ENCODE measurements at regions of chr4 and their contacts with region 1.

Region 1: GRCh38 chr4:10013722-10014121 is 7.6 kb downstream of the SLC2A9 start:
- DNase-seq: no peak
- ATAC-seq: peak; percentile 86
- H3K4me3 ChIP-seq: no peak overlapping the region
- H3K27ac ChIP-seq: no peak overlapping the region
- H3K4me1 ChIP-seq: peaks cover 8% of the 10 kb centered on the region; the same call in 1 of the 2 replicates
- H3K27me3 ChIP-seq: no peaks in the 10 kb centered on the region
- CTCF ChIP-seq: peak; percentile 72 to 78 (median 76)
- EP300 ChIP-seq: no peak
- POLR2A ChIP-seq: no peak
- RAD21 ChIP-seq: peak; percentile 80

Region 2: GRCh38 chr4:9781343-9782135 is 232.2 kb before region 1 on chr4 and contains the start of gene DRD5:
- CTCF ChIA-PET with region 1: interaction called, 15 read pairs
- POLR2A ChIA-PET with region 1: no interaction called
- RAD21 ChIA-PET with region 1: interaction called, 3 read pairs
- SMC1A ChIA-PET with region 1: no interaction called
- in situ Hi-C with region 1: no loop called
- intact Hi-C with region 1: no loop called
- DNase-seq: no peak
- ATAC-seq: no peak
- H3K4me3 ChIP-seq: no peak within 1 kb of the TSS
- H3K27ac ChIP-seq: no peak within 1 kb of the TSS
- H3K4me1 ChIP-seq: no peaks in the 10 kb centered on the region
- H3K27me3 ChIP-seq: no peaks in the 10 kb centered on the region; a peak in 1 of 4 replicates
- CTCF ChIP-seq: no peak
- EP300 ChIP-seq: no peak
- POLR2A ChIP-seq: no peak
- RAD21 ChIP-seq: no peak
- polyA plus RNA-seq, gene DRD5: not detected

Region 3: DNA sequence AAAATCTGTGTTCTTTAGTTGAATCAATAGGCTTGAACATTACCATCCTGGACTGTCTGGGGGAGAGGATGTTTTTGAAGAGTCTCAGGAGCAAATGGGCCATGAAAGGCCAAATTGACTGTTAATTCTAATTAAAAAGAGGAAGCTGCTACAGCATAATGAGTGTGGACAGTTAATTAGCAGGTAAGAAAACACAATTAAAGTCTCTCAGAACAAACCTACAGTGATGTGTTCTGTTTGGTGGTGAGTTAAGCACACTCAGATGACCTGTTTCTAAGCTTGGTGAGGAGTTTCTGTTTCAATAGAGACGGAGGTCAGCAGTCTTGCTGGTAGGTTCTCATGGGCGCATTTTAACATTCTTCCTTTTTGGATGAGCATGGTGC is 164.2 kb before region 1 on chr4:
- CTCF ChIA-PET with region 1: interaction called, 11 read pairs
- POLR2A ChIA-PET with region 1: no interaction called
- RAD21 ChIA-PET with region 1: interaction called, 3 read pairs
- SMC1A ChIA-PET with region 1: interaction called, 5 read pairs
- in situ Hi-C with region 1: no loop called
- intact Hi-C with region 1: no loop called
- DNase-seq: peak; percentile 51
- ATAC-seq: peak; percentile 95
- H3K4me3 ChIP-seq: no peak overlapping the region
- H3K27ac ChIP-seq: no peak overlapping the region
- H3K4me1 ChIP-seq: no peaks in the 10 kb centered on the region; the same call in 1 of the 2 replicates
- H3K27me3 ChIP-seq: no peaks in the 10 kb centered on the region
- CTCF ChIP-seq: no peak
- EP300 ChIP-seq: peak; percentile 53 to 54; a peak in 2 of 4 replicates
- POLR2A ChIP-seq: no peak
- RAD21 ChIP-seq: no peak

Region 4: DNA sequence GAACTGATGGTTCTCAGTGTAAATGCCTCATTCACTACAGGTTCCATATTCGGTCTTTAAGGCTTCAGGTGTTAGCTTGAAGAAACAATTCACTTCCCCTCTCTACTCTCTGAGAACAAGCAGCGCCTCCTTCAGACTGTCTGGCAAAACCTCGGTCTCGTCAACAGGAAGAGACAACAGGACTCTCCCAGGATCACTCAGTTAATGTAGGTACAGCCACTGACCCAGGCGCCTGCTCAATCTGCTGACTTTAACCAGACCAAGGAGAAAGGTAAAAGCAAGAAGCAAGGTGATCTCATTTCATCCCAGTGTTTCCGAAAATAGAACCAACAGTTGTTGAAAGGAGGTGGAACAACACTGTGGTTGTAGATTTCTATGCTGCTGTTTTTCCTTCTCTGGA is 94.7 kb before region 1 on chr4:
- CTCF ChIA-PET with region 1: interaction called, 37 read pairs
- POLR2A ChIA-PET with region 1: interaction called, 3 read pairs
- RAD21 ChIA-PET with region 1: interaction called, 22 read pairs
- SMC1A ChIA-PET with region 1: interaction called, 18 read pairs
- in situ Hi-C with region 1: no loop called
- intact Hi-C with region 1: loop called (anchors 5 kb)
- DNase-seq: no peak
- ATAC-seq: no peak
- H3K4me3 ChIP-seq: no peak overlapping the region
- H3K27ac ChIP-seq: no peak overlapping the region
- H3K4me1 ChIP-seq: no peaks in the 10 kb centered on the region
- H3K27me3 ChIP-seq: no peaks in the 10 kb centered on the region
- CTCF ChIP-seq: no peak
- EP300 ChIP-seq: no peak
- POLR2A ChIP-seq: no peak
- RAD21 ChIP-seq: no peak

Region 5: GRCh38 chr4:9964879-9965278 is 48.8 kb before region 1 on chr4:
- CTCF ChIA-PET with region 1: interaction called, 30 read pairs
- POLR2A ChIA-PET with region 1: interaction called, 39 read pairs
- RAD21 ChIA-PET with region 1: interaction called, 69 read pairs
- SMC1A ChIA-PET with region 1: interaction called, 70 read pairs
- in situ Hi-C with region 1: no loop called
- intact Hi-C with region 1: no loop called
- DNase-seq: no peak
- ATAC-seq: peak; percentile 61
- H3K4me3 ChIP-seq: no peak overlapping the region
- H3K27ac ChIP-seq: no peak overlapping the region
- H3K4me1 ChIP-seq: peaks cover 4% of the 10 kb centered on the region
- H3K27me3 ChIP-seq: no peaks in the 10 kb centered on the region
- CTCF ChIP-seq: no peak
- EP300 ChIP-seq: no peak
- POLR2A ChIP-seq: no peak
- RAD21 ChIP-seq: no peak

Region 6: GRCh38 chr4:9994246-9994847 is 19.4 kb before region 1 on chr4:
- CTCF ChIA-PET with region 1: interaction called, 49 read pairs
- POLR2A ChIA-PET with region 1: interaction called, 15 read pairs
- RAD21 ChIA-PET with region 1: interaction called, 41 read pairs
- SMC1A ChIA-PET with region 1: interaction called, 43 read pairs
- in situ Hi-C with region 1: no loop called
- intact Hi-C with region 1: no loop called
- DNase-seq: no peak
- ATAC-seq: peak; percentile 79
- H3K4me3 ChIP-seq: no peak overlapping the region
- H3K27ac ChIP-seq: 0 out of 2 replicates have a peak overlapping the region, but pooled peaks have one; percentile 30
- H3K4me1 ChIP-seq: peaks cover 23% of the 10 kb centered on the region
- H3K27me3 ChIP-seq: no peaks in the 10 kb centered on the region
- CTCF ChIP-seq: no peak
- EP300 ChIP-seq: no peak
- POLR2A ChIP-seq: no peak
- RAD21 ChIP-seq: no peak

Region 7: DNA sequence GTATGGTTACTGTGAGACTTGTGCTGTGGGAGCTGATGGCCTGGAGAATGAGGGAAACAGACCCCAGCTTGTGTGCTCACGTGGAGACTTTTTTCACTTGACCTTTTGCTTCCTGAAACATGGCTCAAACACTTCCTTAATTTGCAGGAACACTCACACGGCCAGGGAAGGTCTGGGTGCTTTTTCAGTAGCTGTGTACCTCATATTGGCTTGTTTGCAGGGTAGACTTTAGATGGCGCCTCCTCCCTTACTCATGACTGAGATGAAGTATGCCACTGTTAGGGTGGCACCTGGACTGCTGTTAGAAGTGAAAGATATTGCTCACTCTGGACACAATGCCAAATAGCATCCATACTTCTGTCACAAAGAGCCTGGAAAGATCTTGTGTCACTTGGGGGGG is 178.6 kb after region 1 on chr4:
- CTCF ChIA-PET with region 1: no interaction called
- POLR2A ChIA-PET with region 1: no interaction called
- RAD21 ChIA-PET with region 1: no interaction called
- SMC1A ChIA-PET with region 1: no interaction called
- in situ Hi-C with region 1: no loop called
- intact Hi-C with region 1: no loop called
- DNase-seq: no peak
- ATAC-seq: no peak
- H3K4me3 ChIP-seq: no peak overlapping the region
- H3K27ac ChIP-seq: no peak overlapping the region
- H3K4me1 ChIP-seq: no peaks in the 10 kb centered on the region
- H3K27me3 ChIP-seq: no peaks in the 10 kb centered on the region
- CTCF ChIP-seq: no peak
- EP300 ChIP-seq: no peak
- POLR2A ChIP-seq: no peak
- RAD21 ChIP-seq: no peak